ENCODE measurements at regions of chr17 and their contacts with region 1.

Region 1: DNA sequence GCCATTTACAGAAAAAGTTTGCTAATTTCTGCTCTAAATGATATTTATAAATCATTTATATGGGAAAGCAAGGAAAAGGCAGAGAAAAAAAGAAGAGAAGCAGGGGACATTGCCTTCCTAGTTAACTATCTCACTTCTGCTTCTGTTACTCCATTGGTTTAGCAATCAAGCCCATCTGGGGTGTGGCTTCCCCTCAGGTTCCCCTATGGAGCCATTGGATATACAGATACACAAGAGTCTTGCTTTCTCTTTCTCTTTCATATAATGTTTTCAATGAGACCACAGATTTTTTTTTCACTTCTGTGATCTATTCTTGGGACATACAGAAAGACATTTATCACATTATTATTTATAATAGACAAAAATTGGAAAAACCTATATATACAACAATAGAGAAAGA is 105.6 kb upstream of the TOM1L1 start:
- DNase-seq: no peak
- ATAC-seq: no peak

Region 2: DNA sequence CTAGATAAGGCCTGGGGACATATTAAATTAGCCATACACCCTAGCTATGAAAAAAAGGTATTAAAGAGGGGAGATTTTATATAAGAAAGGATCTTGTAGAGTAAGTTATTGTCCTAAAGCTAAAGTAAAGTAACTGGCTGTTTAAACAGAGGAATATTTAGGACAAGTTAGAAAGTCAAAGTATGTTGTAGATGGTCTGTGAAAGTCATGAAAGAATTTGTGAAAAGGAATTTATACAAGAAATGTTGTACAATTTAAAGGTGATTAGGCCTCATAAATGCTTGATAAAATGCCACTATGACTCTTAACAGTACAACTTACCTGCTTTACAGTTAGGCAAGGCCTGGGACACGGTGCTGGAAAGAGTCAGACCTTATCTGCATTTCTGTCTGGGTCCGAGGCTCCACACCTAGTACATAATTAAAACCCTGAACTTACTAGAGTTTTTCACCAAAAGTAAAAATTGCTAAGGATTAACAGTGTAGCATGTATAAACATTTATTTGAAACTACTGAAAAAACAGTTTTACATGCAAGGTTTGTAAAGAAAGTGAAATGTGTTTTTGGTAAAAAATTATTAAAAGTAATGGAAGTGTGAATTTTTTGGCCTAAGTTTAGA is 339.7 kb before region 1 on chr17:
- intact Hi-C with region 1: no loop called
- DNase-seq: no peak
- ATAC-seq: no peak

Region 3: GRCh38 chr17:54749157-54749556 is 45.9 kb before region 1 on chr17:
- intact Hi-C with region 1: loop called (anchors 5 kb)
- DNase-seq: no peak
- ATAC-seq: no peak

Region 4: DNA sequence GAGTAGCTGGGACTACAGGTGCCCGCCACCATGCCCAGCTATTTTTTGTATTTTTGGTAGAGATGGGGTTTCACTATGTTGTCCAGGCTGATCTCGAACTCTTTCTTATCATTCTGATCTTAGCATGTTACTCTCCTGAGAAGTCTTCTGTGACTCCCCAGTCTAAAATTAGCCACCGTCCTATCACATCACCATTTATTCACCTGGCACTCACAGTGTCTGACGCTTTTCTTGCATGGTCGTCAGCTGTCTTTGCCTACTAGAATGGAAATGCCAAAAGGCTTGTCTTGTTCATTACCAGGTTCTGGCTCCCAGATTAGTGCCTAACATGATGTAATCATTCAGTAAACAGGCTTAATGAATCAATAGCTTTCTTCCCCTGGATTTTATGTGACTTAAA is 129.4 kb after region 1 on chr17:
- intact Hi-C with region 1: no loop called
- DNase-seq: no peak
- ATAC-seq: no peak